ENCODE measurements at regions of chr1 and their contacts with region 1.

Region 1: GRCh38 chr1:163410073-163410999 is 88.6 kb downstream of the NUF2 start:
- DNase-seq: peak; percentile 66
- H3K4me3 ChIP-seq: no peak overlapping the region
- H3K27ac ChIP-seq: no peak overlapping the region
- H3K4me1 ChIP-seq: peaks cover 11% of the 10 kb centered on the region
- CTCF ChIP-seq: peak; percentile 93

Region 2: GRCh38 chr1:163248064-163248463 is 162.3 kb before region 1 on chr1:
- CTCF ChIA-PET with region 1: no interaction called
- POLR2A ChIA-PET with region 1: no interaction called
- intact Hi-C with region 1: no loop called
- DNase-seq: no peak
- H3K4me3 ChIP-seq: no peak overlapping the region
- H3K27ac ChIP-seq: no peak overlapping the region
- H3K4me1 ChIP-seq: no peaks in the 10 kb centered on the region
- CTCF ChIP-seq: no peak

Region 3: DNA sequence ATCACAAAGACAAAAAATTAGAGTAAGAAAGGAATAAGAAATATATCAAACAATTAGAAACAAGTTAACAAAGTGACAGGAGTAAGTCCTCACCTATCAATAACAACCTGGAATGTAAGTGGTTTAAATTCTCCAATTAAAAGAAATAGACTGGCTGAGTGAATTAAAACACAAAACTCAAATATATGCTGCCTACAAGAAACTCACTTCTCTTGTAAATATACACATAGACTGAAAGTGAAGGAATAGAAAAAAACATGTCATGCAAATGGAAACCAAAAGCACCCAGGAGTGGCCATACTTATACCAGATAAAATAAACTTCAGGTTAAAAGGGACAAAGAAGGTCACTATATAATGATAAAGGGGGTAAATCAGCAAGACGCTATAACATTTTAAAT is 131.7 kb before region 1 on chr1:
- CTCF ChIA-PET with region 1: no interaction called
- POLR2A ChIA-PET with region 1: no interaction called
- intact Hi-C with region 1: no loop called
- DNase-seq: no peak
- H3K4me3 ChIP-seq: no peak overlapping the region
- H3K27ac ChIP-seq: no peak overlapping the region
- H3K4me1 ChIP-seq: no peaks in the 10 kb centered on the region
- CTCF ChIP-seq: no peak

Region 4: GRCh38 chr1:163459539-163459938 is 49.2 kb after region 1 on chr1:
- CTCF ChIA-PET with region 1: no interaction called
- POLR2A ChIA-PET with region 1: no interaction called
- intact Hi-C with region 1: loop called (anchors 5 kb)
- DNase-seq: no peak
- H3K4me3 ChIP-seq: no peak overlapping the region
- H3K27ac ChIP-seq: no peak overlapping the region
- H3K4me1 ChIP-seq: no peaks in the 10 kb centered on the region
- CTCF ChIP-seq: no peak

Region 5: GRCh38 chr1:163528710-163529348 is 118.5 kb after region 1 on chr1:
- CTCF ChIA-PET with region 1: no interaction called
- POLR2A ChIA-PET with region 1: interaction called, 3 read pairs
- intact Hi-C with region 1: loop called (anchors 2 kb)
- DNase-seq: peak; percentile 34
- H3K4me3 ChIP-seq: no peak overlapping the region
- H3K27ac ChIP-seq: no peak overlapping the region
- H3K4me1 ChIP-seq: no peaks in the 10 kb centered on the region
- CTCF ChIP-seq: peak; percentile 84

Region 6: DNA sequence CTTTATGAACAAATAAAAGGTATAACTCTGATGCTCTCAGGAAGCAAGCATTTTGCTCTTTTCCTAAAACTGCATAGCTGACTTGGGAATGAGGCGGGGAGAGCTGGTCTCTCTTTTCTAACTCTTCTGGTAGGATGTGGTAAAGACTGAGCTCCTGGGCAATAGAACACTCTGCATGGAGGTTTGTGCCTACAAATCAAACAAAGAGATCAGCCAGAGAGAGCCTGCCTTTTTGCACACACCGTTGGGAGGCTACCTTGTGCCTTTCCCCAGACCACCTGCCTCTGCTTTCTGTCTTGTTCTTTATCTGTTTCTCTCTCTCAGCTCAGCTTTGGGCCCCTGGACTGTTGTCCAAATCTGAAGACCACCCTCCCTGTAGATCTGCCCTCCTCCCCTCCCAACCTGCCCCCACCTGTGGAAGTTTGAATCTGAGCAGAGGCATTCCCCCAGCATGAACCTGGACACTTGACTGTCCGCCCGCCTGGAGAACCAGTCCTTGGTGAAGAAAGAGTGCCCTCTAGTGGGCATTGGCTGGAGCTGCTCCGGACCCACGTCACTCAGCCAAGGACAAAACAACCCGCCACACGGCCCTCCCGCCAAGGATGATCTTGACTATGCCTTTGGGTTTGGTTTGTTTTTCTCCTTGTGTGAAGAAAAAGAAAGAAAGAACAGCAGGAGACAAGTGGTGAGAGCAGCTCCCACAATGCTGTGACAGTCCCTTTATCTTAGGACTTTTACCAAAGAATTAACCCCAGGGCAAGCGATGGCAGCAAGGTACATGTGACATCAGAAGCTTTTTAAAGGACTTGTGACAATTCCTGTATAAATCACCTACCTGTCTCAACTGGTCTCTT is 1376.9 kb after region 1 on chr1:
- CTCF ChIA-PET with region 1: no interaction called
- POLR2A ChIA-PET with region 1: no interaction called
- intact Hi-C with region 1: loop called (anchors 1 kb)
- DNase-seq: peak; percentile 70
- H3K4me3 ChIP-seq: no peak overlapping the region
- H3K27ac ChIP-seq: no peak overlapping the region
- H3K4me1 ChIP-seq: no peaks in the 10 kb centered on the region
- CTCF ChIP-seq: peak; percentile 90